Caco-2 (cell line): ENCODE measurements at regions of chr9 and their contacts with region 1.

Region 1: DNA sequence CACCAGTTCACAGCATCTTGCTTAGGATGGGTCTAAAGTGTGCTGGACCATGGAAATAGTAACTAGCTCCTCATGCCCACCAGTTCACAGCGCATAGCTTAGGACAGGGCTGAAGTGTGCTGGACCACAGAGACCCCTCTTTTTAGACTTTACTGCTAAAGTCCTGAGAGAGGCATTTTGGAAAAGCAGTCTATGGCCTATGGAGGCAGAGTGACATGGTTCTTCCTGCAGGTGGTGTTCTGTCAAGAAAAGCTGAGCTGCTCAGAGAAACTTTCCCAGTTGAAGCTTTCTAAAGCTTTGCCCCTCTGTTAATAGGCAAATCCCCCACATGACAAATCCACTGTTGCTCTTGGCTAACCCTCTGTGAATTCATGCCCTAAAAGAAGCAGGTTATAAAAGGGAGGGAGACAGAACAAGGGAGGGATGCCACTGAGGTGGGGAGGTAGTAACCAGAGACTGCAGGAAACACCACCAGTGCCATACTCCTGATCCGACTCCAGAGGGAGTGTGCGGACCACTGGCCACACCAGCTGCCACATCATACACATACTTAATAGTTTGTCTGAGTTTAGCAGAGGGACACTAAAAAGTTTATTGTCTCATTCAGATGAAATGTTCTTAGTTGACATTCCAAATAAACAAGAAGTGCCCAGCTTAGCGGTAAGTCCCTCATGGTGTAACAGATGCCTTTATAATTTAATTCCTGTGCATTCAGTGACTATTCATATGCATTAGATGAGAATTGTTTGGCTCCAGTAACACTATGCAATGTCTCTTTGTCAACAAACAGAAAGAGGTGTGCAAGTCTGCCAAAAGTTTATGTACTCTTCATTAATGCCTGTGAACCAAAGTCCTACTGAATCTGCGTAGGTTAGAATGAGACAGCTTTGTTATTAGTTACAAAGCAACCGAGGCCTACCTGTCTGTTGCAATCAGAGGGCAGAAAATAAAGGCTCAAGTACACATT is 236.2 kb upstream of the NFIL3 start:
- DNase-seq: peak in 1 of 2 experiments; percentile 33
- H3K4me3 ChIP-seq: no peak overlapping the region
- H3K4me3 Mint-ChIP-seq: no peak overlapping the region
- H3K27ac Mint-ChIP-seq: no peak overlapping the region
- H3K4me1 ChIP-seq: peaks cover 6% of the 10 kb centered on the region
- H3K4me1 Mint-ChIP-seq: peaks cover 14% of the 10 kb centered on the region
- H3K27me3 ChIP-seq: no peaks in the 10 kb centered on the region
- H3K27me3 Mint-ChIP-seq: no peaks in the 10 kb centered on the region
- CTCF ChIP-seq: peak; percentile 50 to 65

Region 2: GRCh38 chr9:91560285-91560684 is 99.5 kb before region 1 on chr9:
- CTCF ChIA-PET with region 1: no interaction called
- POLR2A ChIA-PET with region 1: no interaction called
- intact Hi-C with region 1: loop called (anchors 10 kb)
- DNase-seq: no peak
- H3K4me3 ChIP-seq: no peak overlapping the region
- H3K4me3 Mint-ChIP-seq: no peak overlapping the region
- H3K27ac Mint-ChIP-seq: no peak overlapping the region
- H3K4me1 ChIP-seq: no peaks in the 10 kb centered on the region
- H3K4me1 Mint-ChIP-seq: no peaks in the 10 kb centered on the region
- H3K27me3 ChIP-seq: no peaks in the 10 kb centered on the region
- H3K27me3 Mint-ChIP-seq: no peaks in the 10 kb centered on the region
- CTCF ChIP-seq: no peak

Region 3: GRCh38 chr9:91682806-91683205 is 23.0 kb after region 1 on chr9:
- CTCF ChIA-PET with region 1: no interaction called
- POLR2A ChIA-PET with region 1: no interaction called
- intact Hi-C with region 1: no loop called
- DNase-seq: peak in 1 of 2 experiments; percentile 4
- H3K4me3 ChIP-seq: no peak overlapping the region
- H3K4me3 Mint-ChIP-seq: no peak overlapping the region
- H3K27ac Mint-ChIP-seq: no peak overlapping the region
- H3K4me1 ChIP-seq: no peaks in the 10 kb centered on the region
- H3K4me1 Mint-ChIP-seq: no peaks in the 10 kb centered on the region
- H3K27me3 ChIP-seq: no peaks in the 10 kb centered on the region
- H3K27me3 Mint-ChIP-seq: no peaks in the 10 kb centered on the region
- CTCF ChIP-seq: no peak

Region 4: DNA sequence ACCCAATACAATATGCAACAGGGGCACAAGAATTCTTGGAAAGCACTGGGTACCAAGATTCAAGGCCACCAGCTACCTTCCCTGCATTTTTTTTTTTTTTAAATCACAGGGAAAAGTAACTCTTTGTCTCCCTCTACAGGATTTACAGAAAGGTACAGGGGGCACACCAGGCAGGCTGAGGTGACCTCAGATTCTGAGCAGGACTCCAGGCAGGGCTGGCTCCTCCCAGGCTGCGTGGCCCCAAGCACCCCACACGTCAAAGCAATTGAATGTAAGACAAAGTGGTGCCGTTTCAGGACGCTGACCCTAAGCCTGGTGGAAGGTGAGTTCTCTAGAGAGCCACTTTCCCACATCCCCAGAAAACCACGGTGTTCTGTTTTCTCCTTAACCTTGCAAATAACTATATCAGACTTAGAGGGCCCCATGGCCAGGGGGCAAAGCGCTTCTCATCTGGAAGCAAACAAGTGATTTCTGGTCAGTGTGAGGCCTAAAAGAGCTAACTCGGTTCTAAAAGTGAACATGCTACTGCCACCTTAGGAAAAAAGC is 67.6 kb after region 1 on chr9:
- CTCF ChIA-PET with region 1: interaction called, 8 read pairs
- POLR2A ChIA-PET with region 1: no interaction called
- intact Hi-C with region 1: loop called (anchors 1 kb)
- DNase-seq: peak; percentile 47 to 55
- H3K4me3 ChIP-seq: no peak overlapping the region
- H3K4me3 Mint-ChIP-seq: no peak overlapping the region
- H3K27ac Mint-ChIP-seq: no peak overlapping the region
- H3K4me1 ChIP-seq: no peaks in the 10 kb centered on the region
- H3K4me1 Mint-ChIP-seq: no peaks in the 10 kb centered on the region
- H3K27me3 ChIP-seq: no peaks in the 10 kb centered on the region
- H3K27me3 Mint-ChIP-seq: no peaks in the 10 kb centered on the region
- CTCF ChIP-seq: peak; percentile 17 to 53